GM12878 (cell line): ENCODE measurements at regions of chr10 and their contacts with region 1.

Region 1: GRCh38 chr10:33493978-33494377 is 159.5 kb upstream of the NRP1 start:
- DNase-seq: no peak
- ATAC-seq: no peak
- H3K4me3 ChIP-seq: no peak overlapping the region
- H3K27ac ChIP-seq: no peak overlapping the region
- H3K4me1 ChIP-seq: no peaks in the 10 kb centered on the region
- H3K27me3 ChIP-seq: no peaks in the 10 kb centered on the region
- CTCF ChIP-seq: no peak
- EP300 ChIP-seq: no peak
- POLR2A ChIP-seq: no peak
- RAD21 ChIP-seq: no peak

Region 2: DNA sequence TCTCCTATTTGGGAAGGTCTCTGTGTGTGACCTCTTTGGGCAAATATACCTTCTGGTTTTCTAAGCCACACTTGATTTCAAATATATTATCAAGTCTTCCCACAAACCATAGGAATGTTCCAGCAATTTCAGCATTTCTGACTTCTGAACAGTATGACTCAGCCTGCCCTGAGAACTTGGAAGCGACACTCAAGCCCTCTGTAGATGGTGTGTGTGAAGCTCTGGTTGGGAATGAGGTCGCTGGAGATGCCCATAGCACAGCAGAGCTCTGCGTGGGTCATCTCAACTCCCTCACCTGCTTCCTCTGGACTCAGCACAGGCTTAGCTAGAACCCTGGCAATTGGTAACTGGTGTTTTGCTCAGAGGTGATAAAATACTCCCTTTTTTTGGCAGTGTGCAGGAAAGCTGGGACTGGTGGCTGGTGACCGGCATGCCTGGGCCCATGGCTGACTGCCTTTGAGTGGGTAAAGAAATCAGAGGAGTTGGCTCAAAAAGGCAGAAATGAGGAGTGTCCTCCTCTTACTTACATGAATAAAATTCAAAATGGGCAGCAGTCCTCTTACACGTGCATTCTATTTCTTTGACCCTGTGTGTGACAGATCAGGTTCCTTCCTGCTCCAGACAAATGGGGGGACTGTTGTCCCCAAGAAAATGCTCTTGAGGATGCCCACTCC is 72.1 kb before region 1 on chr10:
- CTCF ChIA-PET with region 1: no interaction called
- POLR2A ChIA-PET with region 1: no interaction called
- RAD21 ChIA-PET with region 1: no interaction called
- SMC1A ChIA-PET with region 1: no interaction called
- in situ Hi-C with region 1: no loop called
- intact Hi-C with region 1: no loop called
- DNase-seq: no peak
- ATAC-seq: no peak
- H3K4me3 ChIP-seq: no peak overlapping the region
- H3K27ac ChIP-seq: no peak overlapping the region
- H3K4me1 ChIP-seq: no peaks in the 10 kb centered on the region
- H3K27me3 ChIP-seq: no peaks in the 10 kb centered on the region
- CTCF ChIP-seq: no peak
- EP300 ChIP-seq: no peak
- POLR2A ChIP-seq: no peak
- RAD21 ChIP-seq: no peak

Region 3: DNA sequence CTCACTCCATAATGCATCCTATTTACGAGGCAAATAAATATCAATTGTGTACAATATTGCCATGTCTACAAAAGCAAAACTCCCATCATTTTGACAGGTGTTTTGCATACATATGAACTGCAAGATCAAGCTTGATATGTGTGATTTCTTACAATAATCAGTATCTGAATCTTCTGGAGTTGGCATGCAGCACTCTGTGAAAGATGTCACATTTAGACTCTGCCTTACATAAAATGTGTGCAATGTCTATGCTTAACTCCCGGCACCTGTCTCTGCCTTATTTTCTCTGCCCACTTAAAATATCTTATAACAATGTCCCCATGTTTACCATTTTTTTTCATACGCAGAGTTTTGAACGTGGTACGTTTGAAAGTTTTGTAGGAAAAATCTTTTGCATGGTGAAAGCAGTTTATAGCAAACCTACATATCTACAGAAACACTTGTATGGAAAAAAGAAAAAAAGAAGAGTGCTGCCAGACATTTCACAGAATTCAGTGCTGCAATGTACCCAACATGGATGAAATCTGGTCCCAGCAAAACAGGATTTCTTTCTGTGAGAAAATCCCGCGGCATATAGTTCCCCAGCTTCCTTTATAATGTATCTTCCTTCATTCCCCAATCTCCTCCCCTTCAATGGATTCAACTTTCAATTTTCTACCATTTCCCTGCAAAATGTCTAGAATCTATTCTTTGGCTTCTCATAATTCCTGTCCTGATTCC is 45.4 kb before region 1 on chr10:
- CTCF ChIA-PET with region 1: no interaction called
- POLR2A ChIA-PET with region 1: interaction called, 10 read pairs
- RAD21 ChIA-PET with region 1: no interaction called
- SMC1A ChIA-PET with region 1: no interaction called
- in situ Hi-C with region 1: no loop called
- intact Hi-C with region 1: no loop called
- DNase-seq: no peak
- ATAC-seq: no peak
- H3K4me3 ChIP-seq: no peak overlapping the region
- H3K27ac ChIP-seq: no peak overlapping the region
- H3K4me1 ChIP-seq: no peaks in the 10 kb centered on the region
- H3K27me3 ChIP-seq: no peaks in the 10 kb centered on the region; a peak in 1 of 4 replicates
- CTCF ChIP-seq: no peak
- EP300 ChIP-seq: no peak
- POLR2A ChIP-seq: no peak
- RAD21 ChIP-seq: no peak

Region 4: DNA sequence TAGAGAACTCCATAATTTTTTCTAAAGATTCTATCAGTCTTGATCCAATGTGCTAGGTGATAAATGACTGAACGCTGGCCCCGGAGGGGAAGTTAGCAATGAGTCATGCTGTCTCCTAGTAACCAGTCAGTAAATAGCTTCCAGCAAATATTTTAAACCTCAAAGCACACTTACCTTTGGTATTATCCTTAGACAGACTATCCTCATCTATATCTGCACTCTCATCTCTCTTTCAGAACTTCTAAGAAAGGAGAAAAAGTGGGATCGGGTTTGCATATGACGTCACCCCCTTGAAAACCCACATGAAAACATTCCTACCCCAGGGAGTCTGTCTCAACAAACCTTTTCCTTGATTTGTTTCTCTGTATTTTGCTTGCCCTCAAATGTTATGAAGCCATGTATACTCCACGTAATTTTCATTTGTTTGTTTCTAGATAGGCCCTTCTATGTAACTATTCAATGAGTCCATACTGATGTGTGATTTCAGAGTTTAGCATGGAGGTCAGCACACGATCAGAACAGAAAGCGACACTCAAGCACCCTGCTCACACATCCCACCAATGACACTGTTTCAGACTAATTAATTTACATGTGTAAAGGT is 15.4 kb after region 1 on chr10:
- CTCF ChIA-PET with region 1: no interaction called
- POLR2A ChIA-PET with region 1: interaction called, 3 read pairs
- RAD21 ChIA-PET with region 1: no interaction called
- SMC1A ChIA-PET with region 1: interaction called, 15 read pairs
- in situ Hi-C with region 1: no loop called
- intact Hi-C with region 1: no loop called
- DNase-seq: peak; percentile 25
- ATAC-seq: peak; percentile 87
- H3K4me3 ChIP-seq: no peak overlapping the region
- H3K27ac ChIP-seq: no peak overlapping the region
- H3K4me1 ChIP-seq: no peaks in the 10 kb centered on the region
- H3K27me3 ChIP-seq: no peaks in the 10 kb centered on the region
- CTCF ChIP-seq: no peak
- EP300 ChIP-seq: peak; percentile 70 to 84; a peak in 3 of 4 replicates
- POLR2A ChIP-seq: no peak
- RAD21 ChIP-seq: no peak

Region 5: GRCh38 chr10:33559105-33559504 is 65.1 kb after region 1 on chr10:
- CTCF ChIA-PET with region 1: no interaction called
- POLR2A ChIA-PET with region 1: no interaction called
- RAD21 ChIA-PET with region 1: no interaction called
- SMC1A ChIA-PET with region 1: no interaction called
- in situ Hi-C with region 1: no loop called
- intact Hi-C with region 1: no loop called
- DNase-seq: no peak
- ATAC-seq: peak; percentile 79
- H3K4me3 ChIP-seq: no peak overlapping the region
- H3K27ac ChIP-seq: no peak overlapping the region
- H3K4me1 ChIP-seq: no peaks in the 10 kb centered on the region
- H3K27me3 ChIP-seq: no peaks in the 10 kb centered on the region
- CTCF ChIP-seq: no peak
- EP300 ChIP-seq: no peak; a peak in 1 of 4 replicates
- POLR2A ChIP-seq: no peak
- RAD21 ChIP-seq: no peak